CD8-positive, alpha-beta T cell (primary cell): ENCODE measurements at regions of chr2 and their contacts with region 1.

Region 1: GRCh38 chr2:42117923-42118753 is 51.0 kb upstream of the EML4 start:
- DNase-seq: peak in 1 of 9 experiments; percentile 44
- ATAC-seq: peak; percentile 64
- H3K4me3 ChIP-seq: no peak overlapping the region
- H3K4me3 Mint-ChIP-seq: no peak overlapping the region
- H3K27ac ChIP-seq: peak overlapping the region in 1 of 2 experiments; percentile 24
- H3K27ac Mint-ChIP-seq: peak overlapping the region; percentile 82
- H3K4me1 ChIP-seq: peaks cover 22% of the 10 kb centered on the region
- H3K4me1 Mint-ChIP-seq: peaks cover 48% of the 10 kb centered on the region
- H3K27me3 ChIP-seq: no peaks in the 10 kb centered on the region
- H3K27me3 Mint-ChIP-seq: no peaks in the 10 kb centered on the region
- CTCF ChIP-seq: no peak

Region 2: GRCh38 chr2:42053791-42054701 is 64.1 kb before region 1 on chr2:
- CTCF ChIA-PET with region 1: no interaction called
- POLR2A ChIA-PET with region 1: no interaction called
- intact Hi-C with region 1: no loop called
- DNase-seq: no peak
- ATAC-seq: no peak
- H3K4me3 ChIP-seq: no peak overlapping the region
- H3K4me3 Mint-ChIP-seq: no peak overlapping the region
- H3K27ac ChIP-seq: no peak overlapping the region
- H3K27ac Mint-ChIP-seq: no peak overlapping the region
- H3K4me1 ChIP-seq: no peaks in the 10 kb centered on the region
- H3K4me1 Mint-ChIP-seq: no peaks in the 10 kb centered on the region
- H3K27me3 ChIP-seq: peaks cover 3 to 14% of the 10 kb centered on the region in 2 experiments
- H3K27me3 Mint-ChIP-seq: peaks cover 26% of the 10 kb centered on the region
- CTCF ChIP-seq: no peak

Region 3: GRCh38 chr2:42132966-42133641 is 15.0 kb after region 1 on chr2:
- CTCF ChIA-PET with region 1: interaction called, 20 read pairs
- POLR2A ChIA-PET with region 1: interaction called, 14 read pairs
- intact Hi-C with region 1: loop called in 1 of 2 experiments (anchors 2 kb)
- DNase-seq: peak; percentile 83 to 97 (median 90)
- ATAC-seq: peak; percentile 88
- H3K4me3 ChIP-seq: peak overlapping the region; percentile 6 to 22
- H3K4me3 Mint-ChIP-seq: peak overlapping the region; percentile 76
- H3K27ac ChIP-seq: peak overlapping the region; percentile 61 to 90
- H3K27ac Mint-ChIP-seq: peak overlapping the region; percentile 98
- H3K4me1 ChIP-seq: peaks cover 80% of the 10 kb centered on the region
- H3K4me1 Mint-ChIP-seq: peaks cover 85% of the 10 kb centered on the region
- H3K27me3 ChIP-seq: no peaks in the 10 kb centered on the region
- H3K27me3 Mint-ChIP-seq: no peaks in the 10 kb centered on the region
- CTCF ChIP-seq: no peak